AG04450 (cell line): ENCODE measurements at regions of chr16 and their contacts with region 1.

Region 1: GRCh38 chr16:9047686-9048301 is 43.6 kb upstream of the HAPSTR1 start:
- DNase-seq: peak; percentile 98
- H3K4me3 ChIP-seq: no peak overlapping the region
- H3K27ac ChIP-seq: peak overlapping the region; percentile 99
- H3K27me3 ChIP-seq: no peaks in the 10 kb centered on the region
- CTCF ChIP-seq: no peak

Region 2: GRCh38 chr16:9033125-9033830 is 14.5 kb before region 1 on chr16:
- CTCF ChIA-PET with region 1: interaction called, 16 read pairs
- POLR2A ChIA-PET with region 1: interaction called, 3 read pairs
- DNase-seq: no peak
- H3K4me3 ChIP-seq: no peak overlapping the region
- H3K27ac ChIP-seq: no peak overlapping the region
- H3K27me3 ChIP-seq: no peaks in the 10 kb centered on the region
- CTCF ChIP-seq: peak; percentile 68

Region 3: GRCh38 chr16:9072806-9073341 is 25.1 kb after region 1 on chr16:
- CTCF ChIA-PET with region 1: no interaction called
- POLR2A ChIA-PET with region 1: interaction called, 21 read pairs
- DNase-seq: peak; percentile 83
- H3K4me3 ChIP-seq: 0 out of 2 replicates have a peak overlapping the region, but pooled peaks have one; percentile 15
- H3K27ac ChIP-seq: peak overlapping the region; percentile 87
- H3K27me3 ChIP-seq: no peaks in the 10 kb centered on the region
- CTCF ChIP-seq: no peak